Activated CD8-positive, alpha-beta T cell treated with anti-CD3 and anti-CD28 coated beads, Interleukin-2, amount 10 ng/mL, durations not matched to agents 7 days and 5 days (primary cell): ENCODE measurements at regions of chr5 and their contacts with region 1.

Region 1: DNA sequence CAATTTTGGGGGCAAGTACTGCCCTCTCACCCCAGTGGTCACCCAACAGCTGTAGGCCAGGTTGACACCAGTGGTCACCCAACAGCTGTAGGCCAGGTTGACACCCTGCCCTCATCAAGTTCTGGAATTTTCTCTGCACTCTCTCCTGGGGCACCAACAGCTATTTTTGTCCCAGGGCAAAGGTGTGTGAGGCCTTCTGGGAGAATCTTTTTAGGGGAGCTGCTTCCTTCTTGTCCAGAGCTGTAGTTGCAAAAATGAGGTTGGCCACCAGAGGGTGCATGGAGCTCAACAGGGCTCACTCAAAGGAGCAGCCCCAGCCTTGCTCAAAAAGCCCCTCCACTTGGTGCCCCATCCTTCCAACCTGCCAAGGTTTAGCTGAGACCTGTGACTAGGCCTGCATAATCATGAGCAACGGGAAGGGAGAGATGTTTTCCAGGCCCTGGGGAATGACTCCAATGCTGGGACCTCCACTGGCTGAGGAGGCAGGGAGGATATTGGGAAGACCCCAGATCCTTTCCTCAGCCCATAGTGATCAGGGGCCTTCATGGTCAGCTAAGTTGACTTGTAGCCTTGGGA is 10.6 kb upstream of the P4HA2 start:
- DNase-seq: peak; percentile 87
- ATAC-seq: peak; percentile 90
- H3K4me3 Mint-ChIP-seq: no peak overlapping the region
- H3K27ac Mint-ChIP-seq: no peak overlapping the region
- H3K4me1 Mint-ChIP-seq: peaks cover 2% of the 10 kb centered on the region
- H3K27me3 Mint-ChIP-seq: peaks cover 2% of the 10 kb centered on the region

Region 2: GRCh38 chr5:132190161-132190817 is 48.0 kb before region 1 on chr5:
- CTCF ChIA-PET with region 1: interaction called, 19 read pairs
- POLR2A ChIA-PET with region 1: no interaction called
- DNase-seq: peak; percentile 32
- ATAC-seq: peak; percentile 87
- H3K4me3 Mint-ChIP-seq: no peak overlapping the region
- H3K27ac Mint-ChIP-seq: no peak overlapping the region
- H3K4me1 Mint-ChIP-seq: no peaks in the 10 kb centered on the region
- H3K27me3 Mint-ChIP-seq: peaks cover 12% of the 10 kb centered on the region

Region 3: DNA sequence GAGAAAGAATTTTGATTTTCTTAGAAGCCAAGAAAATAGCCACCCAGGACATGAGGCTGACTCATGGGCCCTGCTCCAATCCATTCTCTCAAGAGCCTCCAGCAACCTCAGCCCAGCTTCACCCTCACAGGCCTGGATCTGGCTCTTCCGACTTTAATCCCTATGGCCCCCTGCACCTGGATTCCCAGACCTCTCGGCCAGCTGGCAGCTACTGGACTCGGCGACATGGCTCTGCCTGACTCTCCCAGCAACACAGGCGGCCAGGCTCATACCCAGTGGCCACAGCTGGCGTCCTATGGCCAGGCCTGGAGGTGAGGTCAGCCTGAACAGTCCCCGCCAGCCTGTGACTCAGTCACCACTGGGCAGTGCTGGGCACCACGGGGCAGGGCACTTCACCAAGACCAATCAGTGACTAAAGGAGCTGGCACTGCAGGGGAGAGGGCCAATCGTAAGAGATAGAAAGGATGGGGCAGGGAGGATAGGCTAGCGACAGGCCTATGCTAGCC is 13.0 kb after region 1 on chr5:
- CTCF ChIA-PET with region 1: interaction called, 30 read pairs
- POLR2A ChIA-PET with region 1: interaction called, 3 read pairs
- DNase-seq: no peak
- ATAC-seq: no peak
- H3K4me3 Mint-ChIP-seq: no peak overlapping the region
- H3K27ac Mint-ChIP-seq: no peak overlapping the region
- H3K4me1 Mint-ChIP-seq: no peaks in the 10 kb centered on the region
- H3K27me3 Mint-ChIP-seq: peaks cover 12% of the 10 kb centered on the region

Region 4: GRCh38 chr5:132325691-132326090 is 87.4 kb after region 1 on chr5:
- CTCF ChIA-PET with region 1: interaction called, 15 read pairs
- POLR2A ChIA-PET with region 1: no interaction called
- DNase-seq: no peak
- ATAC-seq: no peak
- H3K4me3 Mint-ChIP-seq: no peak overlapping the region
- H3K27ac Mint-ChIP-seq: no peak overlapping the region
- H3K4me1 Mint-ChIP-seq: no peaks in the 10 kb centered on the region
- H3K27me3 Mint-ChIP-seq: no peaks in the 10 kb centered on the region

Region 5: GRCh38 chr5:132500931-132501630 is 262.8 kb after region 1 on chr5:
- CTCF ChIA-PET with region 1: interaction called, 16 read pairs
- POLR2A ChIA-PET with region 1: no interaction called
- DNase-seq: peak; percentile 85
- ATAC-seq: peak; percentile 25
- H3K4me3 Mint-ChIP-seq: no peak overlapping the region
- H3K27ac Mint-ChIP-seq: peak overlapping the region; percentile 81
- H3K4me1 Mint-ChIP-seq: peaks cover 45% of the 10 kb centered on the region
- H3K27me3 Mint-ChIP-seq: peaks cover 5% of the 10 kb centered on the region